ENCODE measurements at regions of chr7 and their contacts with region 1.

Region 1: DNA sequence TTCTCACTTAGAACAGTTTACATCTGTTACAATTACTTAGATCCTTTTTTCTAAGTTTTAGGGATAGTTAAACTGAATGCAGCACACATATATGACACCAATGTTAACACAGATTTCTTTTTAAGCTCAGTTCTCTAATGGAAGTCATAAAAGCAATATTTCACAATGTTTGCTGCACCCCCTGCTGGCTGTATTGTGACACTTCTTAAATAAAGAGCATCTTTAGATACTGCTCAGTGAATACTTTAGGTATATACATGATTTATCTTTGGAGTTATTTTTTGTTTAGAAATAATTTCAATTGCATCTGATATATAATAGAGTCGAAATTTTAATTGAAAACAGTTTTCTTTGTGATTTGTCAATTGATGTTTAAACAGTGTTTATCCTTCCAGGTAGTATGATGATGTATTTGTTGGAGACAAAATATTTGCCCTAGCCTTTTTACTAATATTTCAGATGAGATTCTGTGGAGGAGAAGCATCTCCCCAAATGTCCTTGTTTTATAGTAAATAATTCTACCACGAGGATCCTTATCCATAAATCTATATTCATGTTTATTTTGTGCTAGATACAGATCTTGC is 174.4 kb downstream of the ST7 start:
- DNase-seq: peak in 1 of 2 donors; percentile 72
- H3K4me3 ChIP-seq: no peak overlapping the region
- H3K27ac ChIP-seq: no peak overlapping the region
- H3K4me1 ChIP-seq: peaks cover 7 to 12% of the 10 kb centered on the region in 2 donors
- H3K27me3 ChIP-seq: no peaks in the 10 kb centered on the region
- CTCF ChIP-seq: peak; percentile 60 to 68 (median 66)

Region 2: GRCh38 chr7:116173051-116174028 is 954.3 kb before region 1 on chr7:
- intact Hi-C with region 1: loop called (anchors 10 kb)
- DNase-seq: no peak
- H3K4me3 ChIP-seq: no peak overlapping the region
- H3K27ac ChIP-seq: no peak overlapping the region
- H3K4me1 ChIP-seq: peaks cover 0 to 4% of the 10 kb centered on the region in 2 donors
- H3K27me3 ChIP-seq: no peaks in the 10 kb centered on the region
- CTCF ChIP-seq: peak; percentile 26 to 59 (median 56)

Region 3: DNA sequence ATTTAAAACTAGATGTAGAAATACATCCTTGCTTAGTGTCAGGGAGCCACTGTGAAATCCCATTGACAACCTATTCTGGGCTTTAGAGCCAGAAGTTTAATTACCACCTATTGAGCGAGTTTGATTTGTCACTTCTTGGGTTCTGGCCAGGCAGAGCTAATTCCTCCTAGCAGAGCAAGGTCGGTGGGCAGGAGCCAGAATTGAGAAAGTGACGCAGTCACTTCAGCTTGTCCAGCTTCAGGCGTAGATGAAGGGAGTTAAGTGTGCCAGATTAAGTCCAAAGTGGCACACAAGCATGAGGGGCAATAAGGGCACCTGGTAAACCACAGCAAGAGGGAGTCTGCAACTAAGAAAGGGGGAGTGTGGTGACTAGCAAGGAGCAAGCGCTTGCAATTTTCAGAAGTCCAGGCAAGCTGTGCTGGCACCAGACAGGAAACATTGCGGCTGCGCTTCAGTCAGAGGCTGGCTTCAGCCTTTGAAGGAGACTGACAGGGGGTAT is 55.0 kb before region 1 on chr7:
- intact Hi-C with region 1: loop called (anchors 5 kb)
- DNase-seq: peak in 1 of 2 donors; percentile 85
- H3K4me3 ChIP-seq: peak overlapping the region in 1 of 2 donors; percentile 44
- H3K27ac ChIP-seq: peak overlapping the region; percentile 22 to 35
- H3K4me1 ChIP-seq: peaks cover 3 to 29% of the 10 kb centered on the region in 2 donors
- H3K27me3 ChIP-seq: no peaks in the 10 kb centered on the region
- CTCF ChIP-seq: no peak

Measured in ascending aorta (tissue), 2 donors.